ENCODE measurements at regions of chr10 and their contacts with region 1.

Region 1: GRCh38 chr10:67959839-67960476 is 75.5 kb downstream of the SIRT1 start:
- DNase-seq: no peak
- ATAC-seq: peak in 2 of 4 donors; percentile 52 to 68
- H3K4me3 ChIP-seq: no peak overlapping the region
- H3K27ac ChIP-seq: no peak overlapping the region
- H3K4me1 ChIP-seq: peaks cover 0 to 6% (median 0%) of the 10 kb centered on the region in 12 donors
- H3K27me3 ChIP-seq: no peaks in the 10 kb centered on the region
- CTCF ChIP-seq: no peak
- POLR2A ChIP-seq: no peak

Region 2: GRCh38 chr10:67596641-67597040 is 363.3 kb before region 1 on chr10:
- intact Hi-C with region 1: no loop called
- DNase-seq: no peak
- ATAC-seq: no peak
- H3K4me3 ChIP-seq: no peak overlapping the region
- H3K27ac ChIP-seq: no peak overlapping the region
- H3K4me1 ChIP-seq: no peaks in the 10 kb centered on the region
- H3K27me3 ChIP-seq: no peaks in the 10 kb centered on the region
- CTCF ChIP-seq: no peak
- POLR2A ChIP-seq: no peak

Region 3: DNA sequence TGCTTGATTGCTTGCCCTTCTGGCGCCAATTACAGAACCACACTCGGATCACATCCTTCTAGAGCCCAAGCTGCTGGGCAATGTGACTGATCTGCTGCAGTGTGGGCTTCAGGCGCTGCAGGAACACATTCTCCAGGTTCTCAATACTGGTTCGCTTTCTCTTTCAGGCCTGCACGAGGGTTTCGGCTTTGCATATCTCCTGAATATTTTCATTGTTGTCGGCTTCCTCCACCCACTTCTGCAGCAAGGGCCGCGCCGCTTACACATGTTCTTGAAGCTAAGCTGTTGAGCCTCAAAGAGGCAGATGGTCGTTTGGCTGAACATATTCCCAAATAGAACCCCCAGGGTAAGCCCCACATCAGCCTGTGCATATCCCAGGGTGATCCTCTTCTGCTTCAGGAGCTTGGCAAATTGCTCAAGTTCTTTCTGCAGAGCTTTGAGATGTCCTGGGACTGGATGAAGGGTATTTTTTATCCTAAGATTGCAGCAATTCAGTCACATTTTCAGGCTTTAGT is 50.5 kb after region 1 on chr10:
- intact Hi-C with region 1: loop called in 1 of 10 experiments (anchors 10 kb)
- DNase-seq: no peak
- ATAC-seq: no peak
- H3K4me3 ChIP-seq: no peak overlapping the region
- H3K27ac ChIP-seq: no peak overlapping the region
- H3K4me1 ChIP-seq: no peaks in the 10 kb centered on the region
- H3K27me3 ChIP-seq: no peaks in the 10 kb centered on the region
- CTCF ChIP-seq: no peak
- POLR2A ChIP-seq: no peak